GM23248 (cell line): ENCODE measurements at regions of chr5 and their contacts with region 1.

Region 1: DNA sequence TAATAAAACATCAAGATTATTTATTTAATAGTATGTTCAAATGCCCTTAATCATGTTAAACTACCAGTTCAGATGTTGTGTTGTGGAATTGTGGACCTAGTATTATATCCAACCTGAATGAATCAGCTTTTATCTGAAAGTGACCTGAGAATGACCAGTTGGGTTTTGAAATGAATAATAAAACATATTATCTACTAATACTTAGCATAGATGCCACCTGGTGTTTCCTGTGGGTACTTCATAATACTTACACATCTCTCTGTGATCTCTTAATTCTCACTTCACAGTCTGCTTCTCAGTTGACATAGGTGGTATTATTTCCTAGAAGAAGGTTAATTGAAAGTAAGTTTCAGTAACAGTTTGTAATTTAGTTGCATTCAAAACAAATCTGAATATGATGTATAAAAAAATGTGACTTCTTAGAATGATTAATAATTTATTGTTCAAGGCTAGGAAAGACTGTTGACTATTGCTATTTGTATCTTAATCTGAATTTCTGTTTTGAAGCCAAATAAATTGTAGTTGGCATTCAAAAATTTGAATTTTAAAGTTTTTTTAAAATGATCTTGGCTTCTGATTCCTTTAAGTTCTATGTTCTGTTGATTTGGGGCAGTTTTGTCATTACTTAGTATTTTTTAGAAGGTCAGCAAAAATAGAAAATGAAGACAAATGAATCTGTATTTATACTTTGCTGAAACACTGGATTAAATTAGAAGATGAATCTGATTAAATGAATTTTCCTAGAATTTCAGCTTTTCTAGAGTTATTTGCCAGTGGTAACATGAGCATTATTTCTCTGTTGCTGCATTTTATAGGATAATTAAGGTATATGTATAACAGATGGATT is 48.2 kb downstream of the KIF2A start:
- DNase-seq: peak; percentile 81
- H3K4me3 ChIP-seq: no peak overlapping the region
- H3K27ac ChIP-seq: 0 out of 2 replicates have a peak overlapping the region, but pooled peaks have one; percentile 2
- H3K4me1 ChIP-seq: no peaks in the 10 kb centered on the region
- H3K27me3 ChIP-seq: no peaks in the 10 kb centered on the region

Region 2: GRCh38 chr5:62231576-62231975 is 122.7 kb before region 1 on chr5:
- in situ Hi-C with region 1: loop called (anchors 10 kb)
- DNase-seq: no peak
- H3K4me3 ChIP-seq: no peak overlapping the region
- H3K27ac ChIP-seq: no peak overlapping the region
- H3K4me1 ChIP-seq: peaks cover 10% of the 10 kb centered on the region
- H3K27me3 ChIP-seq: peaks cover 3% of the 10 kb centered on the region; the same call in 1 of the 2 replicates